ENCODE measurements at regions of chr1 and their contacts with region 1.

Region 1: GRCh38 chr1:115113766-115114165 is 24.5 kb upstream of the TSPAN2 start:
- DNase-seq: no peak
- H3K4me3 Mint-ChIP-seq: no peak overlapping the region
- H3K27ac Mint-ChIP-seq: no peak overlapping the region
- H3K4me1 Mint-ChIP-seq: peaks cover 6% of the 10 kb centered on the region
- H3K27me3 Mint-ChIP-seq: no peaks in the 10 kb centered on the region

Region 2: GRCh38 chr1:114959423-114959822 is 154.3 kb before region 1 on chr1:
- CTCF ChIA-PET with region 1: no interaction called
- POLR2A ChIA-PET with region 1: no interaction called
- DNase-seq: no peak
- H3K4me3 Mint-ChIP-seq: no peak overlapping the region
- H3K27ac Mint-ChIP-seq: no peak overlapping the region
- H3K4me1 Mint-ChIP-seq: no peaks in the 10 kb centered on the region
- H3K27me3 Mint-ChIP-seq: peaks cover 29% of the 10 kb centered on the region

Region 3: GRCh38 chr1:114986286-114986685 is 127.5 kb before region 1 on chr1:
- CTCF ChIA-PET with region 1: interaction called, 9 read pairs
- POLR2A ChIA-PET with region 1: interaction called, 11 read pairs
- DNase-seq: no peak
- H3K4me3 Mint-ChIP-seq: no peak overlapping the region
- H3K27ac Mint-ChIP-seq: no peak overlapping the region
- H3K4me1 Mint-ChIP-seq: no peaks in the 10 kb centered on the region
- H3K27me3 Mint-ChIP-seq: peaks cover 11% of the 10 kb centered on the region

Region 4: DNA sequence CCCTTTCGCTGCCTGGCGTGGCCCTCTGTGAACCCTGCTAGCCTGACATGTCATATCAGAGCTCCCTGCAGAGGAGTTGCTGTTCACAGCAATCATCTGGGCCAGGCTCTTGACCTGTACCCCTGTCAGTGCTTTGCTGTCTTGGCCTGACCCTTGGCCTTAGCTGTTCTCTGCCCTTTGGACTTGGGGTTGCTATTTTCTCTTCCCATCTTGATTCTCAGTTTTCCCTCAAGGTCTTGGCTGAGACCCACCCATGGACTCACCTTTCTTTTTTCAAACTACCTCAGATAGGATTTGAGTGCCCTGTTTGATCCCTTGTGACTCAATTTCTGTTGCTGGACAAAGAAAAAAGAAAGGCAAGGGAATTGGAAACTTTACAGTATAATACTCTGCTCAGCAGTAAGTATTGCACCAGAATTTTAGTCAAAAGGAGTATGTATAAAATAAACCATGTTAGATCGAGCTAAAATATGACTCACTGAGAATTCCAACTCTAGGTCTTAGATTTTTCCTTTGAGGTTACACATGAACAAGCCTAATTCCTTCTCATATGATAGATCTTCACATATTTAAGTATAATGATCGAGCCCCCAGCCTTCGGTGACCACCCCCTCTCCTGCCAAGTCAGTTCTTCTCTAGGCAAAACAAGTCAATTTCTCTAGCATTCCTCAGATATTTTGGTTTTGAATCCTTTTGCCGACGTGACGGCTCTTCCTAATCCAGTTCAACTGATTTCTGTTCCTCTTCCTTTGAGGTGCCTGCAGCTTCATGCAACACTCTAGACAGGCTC is 113.8 kb after region 1 on chr1:
- CTCF ChIA-PET with region 1: no interaction called
- POLR2A ChIA-PET with region 1: no interaction called
- DNase-seq: no peak
- H3K4me3 Mint-ChIP-seq: no peak overlapping the region
- H3K27ac Mint-ChIP-seq: no peak overlapping the region
- H3K4me1 Mint-ChIP-seq: no peaks in the 10 kb centered on the region
- H3K27me3 Mint-ChIP-seq: no peaks in the 10 kb centered on the region